Ovary (tissue), 10 donors: ENCODE measurements at regions of chr7 and their contacts with region 1.

Region 1: DNA sequence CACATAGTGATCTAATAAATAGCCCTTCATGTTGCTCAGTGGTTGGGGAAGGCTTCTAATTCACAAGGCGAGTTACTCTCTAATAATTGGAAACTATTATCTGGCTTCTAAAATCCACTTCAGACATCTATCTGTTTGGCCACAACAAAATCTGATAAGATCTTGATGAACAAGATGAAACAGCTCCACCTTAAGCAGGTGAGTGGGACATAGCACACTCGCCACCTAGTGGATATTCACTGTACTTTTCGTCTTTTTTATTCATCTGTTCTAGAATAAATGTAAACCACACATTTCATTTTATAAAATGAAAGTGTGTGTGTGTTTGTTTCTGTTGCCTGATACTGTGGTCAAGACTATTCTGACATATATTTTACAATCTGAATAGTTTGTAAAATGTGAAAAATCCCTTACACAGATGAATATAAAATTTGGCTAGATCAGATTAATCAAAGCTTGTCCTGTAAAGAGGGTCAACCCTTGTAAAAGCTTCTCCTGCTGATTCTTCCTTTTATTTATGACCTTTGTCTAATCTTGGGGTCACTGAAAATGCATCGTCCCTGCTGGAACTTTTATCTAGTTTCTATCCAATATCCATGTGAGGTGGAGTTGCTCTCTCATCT is 26.5 kb upstream of the CNTNAP2 start:
- DNase-seq: no peak
- H3K4me3 ChIP-seq: no peak overlapping the region
- H3K27ac ChIP-seq: no peak overlapping the region
- H3K4me1 ChIP-seq: no peaks in the 10 kb centered on the region
- H3K27me3 ChIP-seq: no peaks in the 10 kb centered on the region
- CTCF ChIP-seq: no peak
- EP300 ChIP-seq: no peak
- POLR2A ChIP-seq: no peak

Region 2: GRCh38 chr7:145698526-145699262 is 391.4 kb before region 1 on chr7:
- intact Hi-C with region 1: no loop called
- DNase-seq: no peak
- H3K4me3 ChIP-seq: no peak overlapping the region
- H3K27ac ChIP-seq: no peak overlapping the region
- H3K4me1 ChIP-seq: no peaks in the 10 kb centered on the region
- H3K27me3 ChIP-seq: no peaks in the 10 kb centered on the region
- CTCF ChIP-seq: no peak
- EP300 ChIP-seq: no peak
- POLR2A ChIP-seq: no peak

Region 3: GRCh38 chr7:145893925-145894535 is 196.1 kb before region 1 on chr7:
- intact Hi-C with region 1: no loop called
- DNase-seq: no peak
- H3K4me3 ChIP-seq: no peak overlapping the region
- H3K27ac ChIP-seq: no peak overlapping the region
- H3K4me1 ChIP-seq: no peaks in the 10 kb centered on the region
- H3K27me3 ChIP-seq: no peaks in the 10 kb centered on the region
- CTCF ChIP-seq: no peak
- EP300 ChIP-seq: no peak
- POLR2A ChIP-seq: no peak

Region 4: DNA sequence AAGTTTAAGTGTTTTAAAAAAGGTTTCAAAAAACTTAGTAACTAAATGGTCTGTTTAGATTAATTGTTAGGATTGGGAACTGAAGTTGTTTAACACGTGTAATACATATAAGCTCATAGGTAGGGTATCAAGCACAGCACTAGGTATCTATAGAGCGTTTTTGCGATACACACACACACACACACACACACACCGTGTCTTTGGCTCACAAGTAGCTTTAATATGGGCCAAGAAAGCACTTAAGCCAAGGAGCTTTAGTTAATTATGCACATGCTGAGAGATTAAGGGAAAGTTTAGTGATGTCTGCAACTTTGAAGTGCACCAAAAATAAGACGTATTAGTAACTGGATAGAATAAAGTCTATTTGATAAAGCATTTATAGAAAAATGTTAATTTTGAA is 67.4 kb before region 1 on chr7:
- intact Hi-C with region 1: loop called in 1 of 4 experiments (anchors 5 kb)
- DNase-seq: no peak
- H3K4me3 ChIP-seq: no peak overlapping the region
- H3K27ac ChIP-seq: no peak overlapping the region
- H3K4me1 ChIP-seq: no peaks in the 10 kb centered on the region
- H3K27me3 ChIP-seq: no peaks in the 10 kb centered on the region
- CTCF ChIP-seq: no peak
- EP300 ChIP-seq: no peak
- POLR2A ChIP-seq: no peak

Region 5: DNA sequence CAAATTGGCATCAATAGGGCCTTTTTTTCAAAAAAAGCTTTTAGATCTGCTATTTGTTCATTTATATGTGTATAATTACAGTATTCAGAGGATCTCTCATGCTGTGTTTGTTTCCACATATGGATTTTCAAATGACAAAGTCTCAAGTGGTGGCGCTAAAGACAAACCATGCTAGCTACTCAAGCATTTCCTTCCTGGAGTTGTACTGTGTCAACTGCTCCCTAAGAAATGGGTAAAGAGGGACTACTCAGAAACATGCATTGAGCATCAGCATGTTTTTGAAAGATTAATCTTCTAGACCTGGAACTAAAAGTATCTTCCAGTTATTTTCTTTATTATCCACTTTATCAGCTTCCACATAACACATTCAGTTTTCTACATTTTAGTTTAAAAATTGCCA is 39.2 kb after region 1 on chr7:
- intact Hi-C with region 1: no loop called
- DNase-seq: no peak
- H3K4me3 ChIP-seq: no peak overlapping the region
- H3K27ac ChIP-seq: no peak overlapping the region
- H3K4me1 ChIP-seq: no peaks in the 10 kb centered on the region
- H3K27me3 ChIP-seq: no peaks in the 10 kb centered on the region
- CTCF ChIP-seq: no peak
- EP300 ChIP-seq: no peak
- POLR2A ChIP-seq: no peak